Lower lobe of right lung (tissue), 2 donors: ENCODE measurements at regions of chr7 and their contacts with region 1.

Region 1: GRCh38 chr7:85023045-85023712 is 163.7 kb downstream of the SEMA3D start:
- DNase-seq: no peak
- ATAC-seq: no peak
- H3K4me3 ChIP-seq: no peak overlapping the region
- H3K27ac ChIP-seq: no peak overlapping the region
- H3K4me1 ChIP-seq: no peaks in the 10 kb centered on the region
- H3K27me3 ChIP-seq: no peaks in the 10 kb centered on the region
- CTCF ChIP-seq: peak; percentile 68

Region 2: GRCh38 chr7:83976295-83976694 is 1046.9 kb before region 1 on chr7:
- intact Hi-C with region 1: loop called (anchors 5 kb)
- DNase-seq: no peak
- ATAC-seq: no peak
- H3K4me3 ChIP-seq: no peak overlapping the region
- H3K27ac ChIP-seq: no peak overlapping the region
- H3K4me1 ChIP-seq: no peaks in the 10 kb centered on the region
- H3K27me3 ChIP-seq: no peaks in the 10 kb centered on the region
- CTCF ChIP-seq: peak; percentile 65

Region 3: DNA sequence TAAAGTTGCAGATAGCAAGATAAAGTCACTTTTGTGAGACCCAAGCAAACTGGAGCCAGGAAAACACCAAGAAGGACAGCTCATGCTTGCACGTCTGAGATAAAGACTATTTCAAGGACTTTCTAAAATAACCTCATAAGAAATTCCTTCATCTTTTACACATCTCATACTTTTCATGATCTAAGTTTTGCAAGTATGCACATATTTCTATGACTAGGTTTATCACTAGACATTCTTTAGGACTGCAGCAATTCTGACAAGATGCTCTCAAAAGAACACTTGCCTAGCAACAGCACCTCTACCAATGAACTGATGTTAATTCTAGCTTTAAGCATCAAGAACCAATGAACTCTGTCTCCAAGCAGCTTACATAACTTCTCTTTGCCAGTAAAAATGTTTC is 293.9 kb before region 1 on chr7:
- intact Hi-C with region 1: no loop called
- DNase-seq: no peak
- ATAC-seq: no peak
- H3K4me3 ChIP-seq: no peak overlapping the region
- H3K27ac ChIP-seq: no peak overlapping the region
- H3K4me1 ChIP-seq: no peaks in the 10 kb centered on the region
- H3K27me3 ChIP-seq: no peaks in the 10 kb centered on the region
- CTCF ChIP-seq: no peak

Region 4: GRCh38 chr7:85306115-85306514 is 282.9 kb after region 1 on chr7:
- intact Hi-C with region 1: no loop called
- DNase-seq: no peak
- ATAC-seq: no peak
- H3K4me3 ChIP-seq: no peak overlapping the region
- H3K27ac ChIP-seq: no peak overlapping the region
- H3K4me1 ChIP-seq: no peaks in the 10 kb centered on the region
- H3K27me3 ChIP-seq: no peaks in the 10 kb centered on the region
- CTCF ChIP-seq: no peak

Region 5: DNA sequence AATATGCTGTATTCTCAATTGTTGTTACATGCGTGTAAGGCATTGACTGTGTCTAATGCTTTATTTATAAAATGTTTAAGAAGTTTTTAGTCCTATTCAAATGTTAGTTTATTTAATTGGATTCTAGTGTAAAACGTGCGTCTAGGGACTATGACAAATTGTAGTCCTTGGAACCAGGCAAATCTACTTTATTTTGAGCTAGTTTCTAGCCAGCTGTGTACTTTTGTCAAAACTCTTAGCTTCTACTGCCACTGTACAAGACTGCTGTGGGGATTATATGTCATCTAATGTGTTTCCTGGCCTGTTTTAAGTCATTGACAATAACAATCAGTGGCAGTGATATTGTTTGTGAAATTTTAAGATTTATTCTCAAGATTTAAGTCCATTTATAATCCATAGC is 384.2 kb after region 1 on chr7:
- intact Hi-C with region 1: no loop called
- DNase-seq: no peak
- ATAC-seq: no peak
- H3K4me3 ChIP-seq: no peak overlapping the region
- H3K27ac ChIP-seq: no peak overlapping the region
- H3K4me1 ChIP-seq: no peaks in the 10 kb centered on the region
- H3K27me3 ChIP-seq: no peaks in the 10 kb centered on the region
- CTCF ChIP-seq: no peak